ENCODE measurements at regions of chr1 and their contacts with region 1.

Region 1: GRCh38 chr1:56709269-56709880 is 64.3 kb downstream of the PRKAA2 start:
- DNase-seq: no peak
- ATAC-seq: peak in 3 of 4 donors; percentile 53 to 77 (median 58)
- H3K4me3 ChIP-seq: no peak overlapping the region
- H3K27ac ChIP-seq: no peak overlapping the region
- H3K4me1 ChIP-seq: peaks cover 0 to 18% (median 0%) of the 10 kb centered on the region in 12 donors
- H3K27me3 ChIP-seq: no peaks in the 10 kb centered on the region
- CTCF ChIP-seq: peak; percentile 40 to 72 (median 62)
- POLR2A ChIP-seq: no peak

Region 2: GRCh38 chr1:55155514-55155913 is 1553.9 kb before region 1 on chr1:
- intact Hi-C with region 1: loop called in 1 of 10 experiments (anchors 10 kb)
- DNase-seq: peak; percentile 60 to 81 (median 71)
- ATAC-seq: peak; percentile 75 to 94 (median 91)
- H3K4me3 ChIP-seq: no peak overlapping the region
- H3K27ac ChIP-seq: no peak overlapping the region
- H3K4me1 ChIP-seq: peaks cover 0 to 24% (median 0%) of the 10 kb centered on the region in 12 donors
- H3K27me3 ChIP-seq: no peaks in the 10 kb centered on the region
- CTCF ChIP-seq: no peak
- POLR2A ChIP-seq: no peak

Region 3: DNA sequence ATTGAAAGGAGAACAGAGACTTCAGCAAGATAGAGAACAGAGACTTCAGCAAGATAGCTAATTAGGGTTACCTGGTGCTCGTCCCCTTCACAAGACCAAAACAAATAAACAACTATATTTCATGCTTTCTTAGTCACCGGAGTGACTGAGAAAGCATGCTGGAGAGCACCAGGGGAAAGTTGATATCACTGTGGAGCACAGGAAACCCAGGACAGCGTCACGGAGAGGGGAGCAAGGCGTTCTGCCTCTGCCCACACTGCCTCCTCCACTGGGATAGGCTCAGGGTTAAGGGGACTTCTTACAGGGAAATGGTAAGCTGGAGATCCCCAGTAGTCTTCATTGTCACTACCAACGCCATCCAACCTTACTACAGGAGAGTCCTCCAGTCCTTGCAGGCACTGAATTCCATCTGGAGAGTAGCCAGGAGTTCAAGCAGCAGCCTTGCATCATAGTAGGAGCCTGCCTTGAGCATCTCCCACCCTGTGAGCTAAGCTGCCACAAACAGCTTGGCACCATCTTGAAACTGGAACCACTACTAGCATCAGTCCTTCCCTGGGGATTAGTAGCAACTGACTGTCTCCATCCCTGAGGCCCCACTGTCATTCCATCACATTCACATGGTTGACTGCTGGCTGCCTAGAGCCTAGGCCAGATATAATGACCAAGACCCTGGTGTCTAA is 369.4 kb before region 1 on chr1:
- intact Hi-C with region 1: no loop called
- DNase-seq: no peak
- ATAC-seq: no peak
- H3K4me3 ChIP-seq: no peak overlapping the region
- H3K27ac ChIP-seq: no peak overlapping the region
- H3K4me1 ChIP-seq: no peaks in the 10 kb centered on the region
- H3K27me3 ChIP-seq: no peaks in the 10 kb centered on the region
- CTCF ChIP-seq: no peak
- POLR2A ChIP-seq: no peak

Region 4: GRCh38 chr1:56644919-56645676 is 64.3 kb before region 1 on chr1 and contains the start of gene PRKAA2:
- intact Hi-C with region 1: loop called in 3 of 10 experiments (anchors 2 to 10 kb)
- DNase-seq: peak; percentile 44 to 72 (median 61)
- ATAC-seq: peak; percentile 39 to 93 (median 84)
- H3K4me3 ChIP-seq: peak within 1 kb of the TSS; percentile 42 to 89 (median 64)
- H3K27ac ChIP-seq: peak within 1 kb of the TSS; percentile 73 to 95 (median 88)
- H3K4me1 ChIP-seq: peaks cover 0 to 11% (median 5%) of the 10 kb centered on the region in 12 donors
- H3K27me3 ChIP-seq: peaks cover 0 to 41% (median 0%) of the 10 kb centered on the region in 9 donors
- CTCF ChIP-seq: peak in 1 of 12 donors; percentile 8
- POLR2A ChIP-seq: peak in 1 of 2 donors; percentile 28
- total RNA-seq, gene PRKAA2: 51.3 to 163 (median 114) TPM